Gastrocnemius medialis (tissue), 4 donors: ENCODE measurements at regions of chr7 and their contacts with region 1.

Region 1: GRCh38 chr7:97117372-97118188 is at the start of gene SDHAF3:
- DNase-seq: peak; percentile 89 to 96
- ATAC-seq: peak; percentile 97 to 99
- H3K4me3 ChIP-seq: peak within 1 kb of the TSS; percentile 60 to 82 (median 68)
- H3K27ac ChIP-seq: peak within 1 kb of the TSS; percentile 58 to 76 (median 70)
- H3K4me1 ChIP-seq: peaks cover 14 to 22% of the 10 kb centered on the region in 2 donors
- H3K27me3 ChIP-seq: no peaks in the 10 kb centered on the region
- CTCF ChIP-seq: peak in 1 of 5 experiments; percentile 32
- POLR2A ChIP-seq: peak; percentile 54 to 60
- total RNA-seq, gene SDHAF3: 3.9 to 12.4 (median 6.4) TPM

Region 2: DNA sequence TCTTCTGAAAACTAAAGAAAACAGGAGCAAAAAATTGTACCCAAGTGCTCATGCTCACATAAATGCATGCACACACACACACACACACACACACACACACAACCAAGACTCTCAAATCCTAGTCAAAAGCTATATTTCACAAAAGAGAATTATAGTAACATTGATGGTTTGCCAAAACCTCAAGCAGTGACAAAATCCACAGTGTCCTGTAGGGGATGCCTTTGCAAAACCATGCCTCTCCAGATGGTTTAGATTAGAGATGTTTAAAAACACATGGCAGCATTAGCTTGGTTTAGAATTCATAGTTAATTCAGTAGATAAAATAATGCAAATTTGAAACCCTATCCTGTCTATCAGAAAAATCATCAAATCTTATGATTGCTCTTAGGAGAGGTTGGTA is 1113.0 kb before region 1 on chr7:
- in situ Hi-C with region 1: no loop called
- intact Hi-C with region 1: no loop called
- DNase-seq: no peak
- ATAC-seq: no peak
- H3K4me3 ChIP-seq: no peak overlapping the region
- H3K27ac ChIP-seq: no peak overlapping the region
- H3K4me1 ChIP-seq: no peaks in the 10 kb centered on the region
- H3K27me3 ChIP-seq: no peaks in the 10 kb centered on the region
- CTCF ChIP-seq: no peak
- POLR2A ChIP-seq: no peak

Region 3: DNA sequence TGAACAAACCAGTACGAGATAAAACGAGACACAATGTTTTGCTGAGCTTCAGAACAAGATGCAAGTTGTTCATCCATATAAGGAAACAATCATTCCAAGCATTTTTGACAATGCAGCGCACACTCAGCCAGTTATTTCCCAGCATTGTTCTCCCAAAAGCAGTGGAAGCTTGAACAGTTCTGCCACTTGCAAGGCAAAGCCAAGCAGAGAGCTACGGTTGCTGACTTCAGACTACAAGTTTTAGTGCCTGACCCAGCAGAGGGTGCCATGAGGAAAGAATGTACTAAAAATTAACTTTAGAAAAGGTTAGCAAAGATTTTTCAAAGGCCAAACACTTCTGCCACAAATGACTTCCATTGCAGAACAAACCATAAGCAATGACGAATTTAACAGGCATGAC is 948.1 kb before region 1 on chr7:
- in situ Hi-C with region 1: no loop called
- intact Hi-C with region 1: no loop called
- DNase-seq: no peak
- ATAC-seq: no peak
- H3K4me3 ChIP-seq: no peak overlapping the region
- H3K27ac ChIP-seq: no peak overlapping the region
- H3K4me1 ChIP-seq: no peaks in the 10 kb centered on the region
- H3K27me3 ChIP-seq: no peaks in the 10 kb centered on the region
- CTCF ChIP-seq: no peak
- POLR2A ChIP-seq: no peak

Region 4: DNA sequence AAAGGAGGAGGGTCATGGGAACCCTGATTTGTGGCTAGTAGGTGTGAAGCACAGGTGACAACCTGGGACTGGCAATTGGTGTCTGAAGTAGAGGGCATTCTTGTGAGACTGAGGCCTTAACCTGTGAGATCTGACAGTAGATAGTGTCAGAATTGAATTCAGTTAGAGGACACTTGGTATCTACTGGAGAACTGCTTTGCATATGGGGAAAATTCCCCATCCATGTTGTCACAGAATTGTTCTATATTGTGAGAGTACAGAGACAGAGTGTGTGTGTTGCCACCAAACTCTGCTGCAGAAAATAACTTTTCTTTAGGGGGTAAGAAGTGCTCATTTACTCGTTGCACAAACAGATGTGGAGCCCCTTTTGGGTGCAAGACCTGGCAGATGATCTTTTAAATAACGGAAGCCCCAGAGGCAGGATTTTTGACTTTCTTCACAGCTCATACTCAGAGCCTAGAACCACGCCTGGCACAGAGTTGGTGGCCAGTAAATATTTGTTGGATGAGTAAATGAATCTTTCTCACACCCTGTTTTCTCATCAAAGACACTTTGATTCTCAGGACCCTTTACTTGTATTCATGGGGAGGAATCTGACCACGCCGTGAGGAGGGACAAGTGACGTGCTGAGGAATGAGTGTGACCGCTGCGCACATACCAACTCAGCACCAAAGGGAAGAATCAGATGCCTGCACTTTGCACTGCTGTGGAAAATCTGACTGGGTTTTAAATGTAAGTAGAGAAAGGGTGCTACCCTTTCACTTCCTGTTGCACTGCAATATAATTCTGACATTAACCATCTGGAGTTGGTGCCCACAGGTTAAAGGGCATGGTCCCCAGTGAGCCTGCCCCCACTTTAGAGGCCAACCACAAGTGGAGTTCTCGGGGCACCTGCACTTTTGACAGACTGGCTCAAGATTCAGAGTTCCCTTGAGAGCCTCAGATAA is 39.3 kb before region 1 on chr7:
- in situ Hi-C with region 1: no loop called
- intact Hi-C with region 1: no loop called
- DNase-seq: no peak
- ATAC-seq: no peak
- H3K4me3 ChIP-seq: no peak overlapping the region
- H3K27ac ChIP-seq: no peak overlapping the region
- H3K4me1 ChIP-seq: no peaks in the 10 kb centered on the region
- H3K27me3 ChIP-seq: no peaks in the 10 kb centered on the region
- CTCF ChIP-seq: no peak
- POLR2A ChIP-seq: no peak

Region 5: DNA sequence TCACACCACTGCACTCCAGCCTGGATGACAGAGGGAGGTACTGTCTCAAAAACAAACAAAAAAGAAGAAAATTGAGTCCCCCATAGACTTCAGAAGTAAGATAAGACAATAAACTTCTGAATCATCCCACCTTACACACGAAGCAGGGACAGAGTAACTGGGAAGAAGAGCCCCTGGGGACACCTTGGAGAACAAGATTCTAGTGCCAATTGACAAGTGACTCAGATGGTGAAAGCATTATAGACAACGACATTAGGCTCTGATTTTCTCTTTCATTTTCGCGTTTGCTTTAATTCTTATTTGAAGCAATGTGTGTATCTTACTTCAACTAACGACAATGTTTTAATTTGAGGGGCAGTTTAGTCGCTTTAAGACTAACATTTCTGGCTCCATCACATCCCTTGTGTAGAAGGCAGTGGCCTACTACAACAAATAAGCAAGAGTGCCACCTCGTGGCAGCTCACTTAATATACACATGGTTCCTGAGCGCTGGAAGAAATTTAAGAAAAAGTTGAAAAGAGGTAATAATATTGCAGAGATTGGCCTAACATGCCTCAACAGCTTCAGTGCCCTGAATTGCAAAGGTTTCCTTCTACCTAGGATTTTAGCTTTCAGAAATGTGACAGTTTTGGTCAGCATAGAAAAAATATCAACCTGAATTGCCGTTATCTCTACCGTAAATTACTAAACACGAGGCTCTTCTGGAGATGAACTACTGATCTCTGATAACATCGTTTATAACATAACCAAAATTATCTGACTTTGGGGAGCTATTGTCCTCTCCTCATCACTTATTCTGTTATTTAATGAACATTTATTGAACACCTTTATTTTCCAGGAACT is 717.9 kb after region 1 on chr7:
- in situ Hi-C with region 1: loop called in 1 of 4 experiments (anchors 25 kb)
- intact Hi-C with region 1: no loop called
- DNase-seq: peak in 1 of 2 donors; percentile 18
- ATAC-seq: no peak
- H3K4me3 ChIP-seq: no peak overlapping the region
- H3K27ac ChIP-seq: no peak overlapping the region
- H3K4me1 ChIP-seq: no peaks in the 10 kb centered on the region
- H3K27me3 ChIP-seq: peaks cover 0 to 3% (median 0%) of the 10 kb centered on the region in 3 donors
- CTCF ChIP-seq: peak in 3 of 5 experiments; percentile 25 to 60 (median 41)
- POLR2A ChIP-seq: no peak